Heart right ventricle (tissue), 16 donors: ENCODE measurements at regions of chr6 and their contacts with region 1.

Region 1: DNA sequence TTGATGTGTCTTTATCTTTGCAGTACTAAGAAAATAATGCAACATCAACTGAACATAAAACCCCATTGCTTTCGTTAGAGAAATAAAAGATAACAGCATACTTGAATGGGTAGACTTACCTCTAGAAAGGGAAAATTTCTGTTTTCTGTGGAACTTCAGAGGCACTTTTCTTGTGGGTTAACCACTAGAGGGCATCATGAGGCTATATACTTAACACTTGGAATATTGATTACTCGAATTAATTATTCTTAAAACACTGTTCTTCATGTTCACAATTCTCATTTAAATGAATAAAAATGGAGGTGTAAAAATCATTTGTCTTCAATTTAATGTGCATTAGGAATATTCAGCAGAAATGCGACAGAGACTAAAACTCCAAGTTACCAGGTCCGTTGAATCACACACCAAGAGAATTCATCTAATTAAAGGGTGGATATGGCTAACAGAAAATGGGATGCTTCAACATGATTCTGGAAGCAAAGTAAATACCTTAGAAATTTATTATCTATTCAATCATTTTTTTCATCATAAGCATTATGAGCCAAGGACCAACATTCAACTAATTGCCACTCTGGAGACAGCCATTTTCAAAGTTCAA is 330.8 kb upstream of the PREP start:
- DNase-seq: no peak
- ATAC-seq: no peak
- H3K4me3 ChIP-seq: no peak overlapping the region
- H3K27ac ChIP-seq: no peak overlapping the region
- H3K4me1 ChIP-seq: peaks cover 0 to 7% (median 0%) of the 10 kb centered on the region in 9 donors
- H3K27me3 ChIP-seq: no peaks in the 10 kb centered on the region
- CTCF ChIP-seq: peak; percentile 29 to 77 (median 69)

Region 2: GRCh38 chr6:105402939-105403935 is 330.4 kb before region 1 on chr6 and contains the start of gene PREP:
- intact Hi-C with region 1: no loop called
- DNase-seq: peak; percentile 81 to 89
- ATAC-seq: peak; percentile 93 to 98 (median 96)
- H3K4me3 ChIP-seq: peak within 1 kb of the TSS; percentile 68 to 99 (median 94)
- H3K27ac ChIP-seq: peak within 1 kb of the TSS; percentile 60 to 92 (median 88)
- H3K4me1 ChIP-seq: peaks cover 7 to 42% (median 27%) of the 10 kb centered on the region in 9 donors
- H3K27me3 ChIP-seq: no peaks in the 10 kb centered on the region
- CTCF ChIP-seq: peak; percentile 36 to 79 (median 71)
- total RNA-seq, gene PREP: 23.7 to 37.4 (median 28.9) TPM

Region 3: DNA sequence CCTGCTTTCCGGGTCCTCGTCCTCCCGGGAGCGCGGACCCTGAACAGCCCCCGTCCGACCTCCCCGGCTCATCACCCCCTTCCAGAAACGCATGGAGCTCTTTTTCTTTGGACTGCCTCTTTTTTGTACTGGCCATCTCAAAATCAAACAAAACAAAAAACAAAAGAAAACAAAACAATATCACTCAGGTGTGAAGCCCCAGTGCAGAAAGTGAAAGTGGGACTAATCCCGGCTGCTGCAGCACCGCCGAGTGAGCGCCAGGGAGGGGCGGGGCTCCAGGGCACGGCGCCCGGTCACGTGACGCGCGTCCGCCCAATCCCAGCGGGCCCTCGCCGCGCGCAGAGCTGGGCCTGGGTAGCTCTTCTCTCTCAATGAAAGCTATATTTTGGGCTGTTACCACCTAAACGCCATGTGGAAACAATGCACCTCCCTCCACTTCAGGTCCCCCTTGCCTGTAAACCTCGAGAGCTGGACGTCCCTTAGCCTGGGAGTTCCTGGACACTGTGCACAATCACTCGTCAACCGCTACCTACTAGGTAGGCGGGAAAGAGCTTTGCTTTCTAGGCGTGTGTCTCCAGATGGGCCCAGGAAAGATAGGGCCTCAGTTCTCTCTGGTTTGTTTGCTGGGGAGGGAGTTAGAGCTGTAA is 258.8 kb after region 1 on chr6:
- intact Hi-C with region 1: loop called in 3 of 10 experiments (anchors 10 kb)
- DNase-seq: peak; percentile 74 to 86
- ATAC-seq: peak; percentile 91 to 96 (median 94)
- H3K4me3 ChIP-seq: peak overlapping the region; percentile 51 to 74 (median 64)
- H3K27ac ChIP-seq: peak overlapping the region in 6 of 10 donors; percentile 4 to 85 (median 66)
- H3K4me1 ChIP-seq: peaks cover 3 to 44% (median 34%) of the 10 kb centered on the region in 9 donors
- H3K27me3 ChIP-seq: peaks cover 0 to 100% (median 98%) of the 10 kb centered on the region in 7 donors
- CTCF ChIP-seq: no peak

Region 4: GRCh38 chr6:106103728-106104109 is 370.1 kb after region 1 on chr6:
- intact Hi-C with region 1: loop called in 1 of 10 experiments (anchors 10 kb)
- DNase-seq: no peak
- ATAC-seq: peak in 5 of 8 donors; percentile 31 to 52 (median 48)
- H3K4me3 ChIP-seq: peak overlapping the region in 9 of 10 donors; percentile 4 to 56 (median 34)
- H3K27ac ChIP-seq: peak overlapping the region in 9 of 10 donors; percentile 23 to 89 (median 57)
- H3K4me1 ChIP-seq: peaks cover 0 to 34% (median 6%) of the 10 kb centered on the region in 9 donors
- H3K27me3 ChIP-seq: peaks cover 0 to 40% (median 21%) of the 10 kb centered on the region in 7 donors
- CTCF ChIP-seq: no peak

Region 5: GRCh38 chr6:106223300-106223930 is 489.8 kb after region 1 on chr6:
- intact Hi-C with region 1: loop called in 8 of 10 experiments (anchors 2 to 10 kb)
- DNase-seq: peak in 1 of 2 donors; percentile 66
- ATAC-seq: peak in 5 of 8 donors; percentile 62 to 75 (median 63)
- H3K4me3 ChIP-seq: no peak overlapping the region
- H3K27ac ChIP-seq: no peak overlapping the region
- H3K4me1 ChIP-seq: peaks cover 0 to 10% (median 0%) of the 10 kb centered on the region in 9 donors
- H3K27me3 ChIP-seq: no peaks in the 10 kb centered on the region
- CTCF ChIP-seq: peak; percentile 40 to 76 (median 66)

Region 6: DNA sequence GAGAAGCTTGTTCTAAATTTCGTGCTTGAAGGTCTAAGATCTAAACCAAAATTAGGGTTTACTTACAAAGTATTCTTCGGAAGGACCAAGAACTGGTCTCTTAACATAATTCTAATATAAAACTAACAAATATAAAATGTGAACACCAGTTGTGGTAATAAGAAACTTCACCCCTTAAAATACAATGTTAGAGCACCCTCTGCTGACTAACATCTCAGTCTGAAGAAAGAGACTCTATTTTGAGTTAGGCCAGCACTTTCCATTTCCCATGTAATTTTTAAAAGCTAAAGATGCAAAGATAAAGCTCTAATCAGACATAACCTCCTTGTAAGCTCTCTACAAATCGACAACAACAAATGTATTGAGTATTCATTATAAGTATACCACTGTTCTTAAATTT is 567.3 kb after region 1 on chr6:
- intact Hi-C with region 1: loop called in 2 of 10 experiments (anchors 10 kb)
- DNase-seq: no peak
- ATAC-seq: peak in 1 of 8 donors; percentile 38
- H3K4me3 ChIP-seq: no peak overlapping the region
- H3K27ac ChIP-seq: no peak overlapping the region
- H3K4me1 ChIP-seq: peaks cover 0 to 5% (median 0%) of the 10 kb centered on the region in 9 donors
- H3K27me3 ChIP-seq: no peaks in the 10 kb centered on the region
- CTCF ChIP-seq: peak; percentile 15 to 68 (median 57)